Activated CD4-positive, alpha-beta memory T cell treated with anti-CD3 and anti-CD28 coated beads for 36 hours (primary cell): ENCODE measurements at regions of chr7 and their contacts with region 1.

Region 1: DNA sequence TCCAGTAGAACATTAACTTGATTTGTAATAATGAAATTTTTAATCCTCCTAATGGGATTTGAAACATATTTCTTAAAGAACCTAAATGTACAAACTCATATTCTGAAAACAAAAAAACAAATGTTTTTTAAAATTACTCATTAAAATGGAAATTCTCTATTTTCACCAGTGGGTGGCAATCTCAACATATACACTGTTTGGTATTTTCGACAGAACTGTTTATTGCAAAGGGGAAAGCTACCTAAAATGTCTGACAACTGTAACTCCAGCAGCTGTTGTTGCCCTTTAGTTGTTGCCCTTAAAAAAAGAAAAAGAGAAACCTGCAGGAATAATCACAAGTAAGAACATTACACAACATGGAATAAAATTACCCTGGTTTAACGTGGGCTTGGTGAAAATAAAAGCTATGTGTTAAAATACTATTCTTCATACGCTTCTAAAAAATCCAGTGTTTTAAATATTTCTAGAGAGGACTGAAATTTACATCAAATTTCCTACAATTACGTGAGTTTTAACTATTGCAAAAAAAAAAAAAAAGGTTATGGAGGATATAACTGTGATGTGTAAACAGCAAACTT is 54.5 kb downstream of the COL1A2 start:
- DNase-seq: no peak
- H3K4me3 Mint-ChIP-seq: no peak overlapping the region
- H3K27ac Mint-ChIP-seq: no peak overlapping the region
- H3K4me1 Mint-ChIP-seq: no peaks in the 10 kb centered on the region
- H3K27me3 Mint-ChIP-seq: peaks cover 15% of the 10 kb centered on the region

Region 2: DNA sequence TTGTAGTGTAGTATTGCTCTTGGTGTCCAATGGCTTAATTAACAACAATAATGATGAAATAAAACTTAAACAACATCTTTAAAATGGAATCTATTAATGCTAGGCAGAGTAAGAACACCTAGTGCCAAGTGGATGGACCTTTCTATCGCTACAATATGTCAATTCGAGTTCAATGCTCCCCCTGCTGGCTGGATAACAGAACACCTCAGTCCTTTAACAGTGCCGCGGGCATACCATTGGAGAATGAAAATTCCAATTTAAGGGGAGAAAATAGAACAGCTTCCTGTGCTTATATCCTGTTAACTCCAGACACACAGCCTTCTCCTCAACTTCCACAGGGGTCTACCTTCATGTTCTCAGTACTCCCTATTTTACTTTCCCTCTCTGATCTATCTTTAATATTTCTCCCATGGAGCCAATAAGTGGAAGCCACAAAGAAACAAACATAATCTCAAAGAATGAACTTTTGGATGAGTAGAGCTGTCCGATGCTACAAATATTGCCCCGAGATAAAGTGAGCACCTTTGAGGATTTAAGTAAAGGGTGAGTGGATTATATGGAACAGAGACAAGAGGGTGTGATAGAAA is 13.1 kb before region 1 on chr7:
- CTCF ChIA-PET with region 1: interaction called, 13 read pairs
- POLR2A ChIA-PET with region 1: no interaction called
- intact Hi-C with region 1: no loop called
- DNase-seq: peak; percentile 46
- H3K4me3 Mint-ChIP-seq: no peak overlapping the region
- H3K27ac Mint-ChIP-seq: no peak overlapping the region
- H3K4me1 Mint-ChIP-seq: no peaks in the 10 kb centered on the region
- H3K27me3 Mint-ChIP-seq: peaks cover 17% of the 10 kb centered on the region

Region 3: DNA sequence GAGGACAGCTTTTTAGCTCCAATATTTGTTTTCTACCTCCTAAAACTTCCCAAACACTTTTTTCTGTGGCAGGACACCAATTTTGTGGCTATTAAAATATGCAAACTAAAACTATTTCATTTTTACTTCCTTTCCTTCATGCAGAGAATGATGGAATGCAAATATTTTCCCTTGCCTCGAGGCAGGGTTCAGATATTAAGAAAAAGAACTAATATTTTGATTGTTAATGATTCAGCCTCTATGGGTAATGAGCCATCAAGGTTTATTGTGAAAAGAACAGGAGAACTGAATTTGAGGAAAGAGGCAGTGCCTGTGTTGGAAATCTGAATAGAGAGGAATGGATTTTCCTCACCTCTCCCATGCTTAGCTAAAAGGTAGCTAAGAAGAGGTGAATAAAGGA is 17.3 kb after region 1 on chr7:
- CTCF ChIA-PET with region 1: interaction called, 13 read pairs
- POLR2A ChIA-PET with region 1: no interaction called
- intact Hi-C with region 1: no loop called
- DNase-seq: no peak
- H3K4me3 Mint-ChIP-seq: no peak overlapping the region
- H3K27ac Mint-ChIP-seq: no peak overlapping the region
- H3K4me1 Mint-ChIP-seq: no peaks in the 10 kb centered on the region
- H3K27me3 Mint-ChIP-seq: peaks cover 3% of the 10 kb centered on the region

Region 4: GRCh38 chr7:94657771-94658693 is 208.8 kb after region 1 on chr7:
- CTCF ChIA-PET with region 1: interaction called, 16 read pairs
- POLR2A ChIA-PET with region 1: no interaction called
- intact Hi-C with region 1: loop called (anchors 5 kb)
- DNase-seq: peak; percentile 95
- H3K4me3 Mint-ChIP-seq: peak overlapping the region; percentile 85
- H3K27ac Mint-ChIP-seq: no peak overlapping the region
- H3K4me1 Mint-ChIP-seq: peaks cover 12% of the 10 kb centered on the region
- H3K27me3 Mint-ChIP-seq: peaks cover 16% of the 10 kb centered on the region

Region 5: DNA sequence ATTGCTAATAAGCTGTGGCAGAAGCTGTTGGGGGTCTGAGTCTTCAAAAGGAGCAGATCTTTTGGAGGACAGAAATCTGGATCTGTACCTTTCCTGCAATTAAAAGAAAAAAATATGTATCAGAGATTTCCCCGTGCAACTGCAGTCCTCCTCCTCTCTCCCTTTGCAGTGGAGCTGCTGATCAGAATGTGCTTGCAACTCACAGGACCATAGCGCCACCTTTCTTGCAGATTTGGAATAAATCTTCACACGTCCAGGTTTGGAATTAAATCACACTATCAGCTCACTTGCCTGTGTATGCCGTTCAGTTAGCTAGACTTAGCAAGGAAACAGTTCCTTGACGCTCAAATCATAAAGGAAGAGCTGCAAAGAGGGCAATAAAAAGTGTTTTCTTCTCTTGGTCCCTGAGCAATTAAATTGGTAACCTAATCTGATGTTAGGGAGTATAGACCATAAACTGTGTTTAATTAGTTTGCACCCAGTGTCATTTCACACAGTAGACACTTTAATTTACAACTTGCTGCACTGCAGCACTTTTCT is 797.7 kb after region 1 on chr7:
- CTCF ChIA-PET with region 1: interaction called, 19 read pairs
- POLR2A ChIA-PET with region 1: no interaction called
- intact Hi-C with region 1: loop called (anchors 1 kb)
- DNase-seq: peak; percentile 19
- H3K4me3 Mint-ChIP-seq: no peak overlapping the region
- H3K27ac Mint-ChIP-seq: no peak overlapping the region
- H3K4me1 Mint-ChIP-seq: no peaks in the 10 kb centered on the region
- H3K27me3 Mint-ChIP-seq: peaks cover 4% of the 10 kb centered on the region